ENCODE measurements at regions of chr2 and their contacts with region 1.

Region 1: GRCh38 chr2:223692191-223692947 is 90.2 kb upstream of the SCG2 start:
- DNase-seq: peak; percentile 60
- H3K4me3 ChIP-seq: no peak overlapping the region
- H3K27ac ChIP-seq: no peak overlapping the region
- H3K4me1 ChIP-seq: peaks cover 28% of the 10 kb centered on the region
- H3K27me3 ChIP-seq: no peaks in the 10 kb centered on the region
- CTCF ChIP-seq: peak; percentile 87 to 92

Region 2: GRCh38 chr2:222976521-222977076 is 715.8 kb before region 1 on chr2:
- CTCF ChIA-PET with region 1: no interaction called
- dilution Hi-C with region 1: no loop called
- in situ Hi-C with region 1: no loop called
- intact Hi-C with region 1: loop called (anchors 5 kb)
- DNase-seq: no peak
- H3K4me3 ChIP-seq: no peak overlapping the region
- H3K27ac ChIP-seq: no peak overlapping the region
- H3K4me1 ChIP-seq: peaks cover 15% of the 10 kb centered on the region
- H3K27me3 ChIP-seq: no peaks in the 10 kb centered on the region
- CTCF ChIP-seq: no peak

Region 3: GRCh38 chr2:223727562-223727961 is 35.2 kb after region 1 on chr2:
- CTCF ChIA-PET with region 1: no interaction called
- dilution Hi-C with region 1: no loop called
- in situ Hi-C with region 1: no loop called
- intact Hi-C with region 1: loop called (anchors 5 kb)
- DNase-seq: peak; percentile 62
- H3K4me3 ChIP-seq: no peak overlapping the region
- H3K27ac ChIP-seq: no peak overlapping the region
- H3K4me1 ChIP-seq: peaks cover 21% of the 10 kb centered on the region
- H3K27me3 ChIP-seq: no peaks in the 10 kb centered on the region
- CTCF ChIP-seq: peak; percentile 57 to 80

Region 4: DNA sequence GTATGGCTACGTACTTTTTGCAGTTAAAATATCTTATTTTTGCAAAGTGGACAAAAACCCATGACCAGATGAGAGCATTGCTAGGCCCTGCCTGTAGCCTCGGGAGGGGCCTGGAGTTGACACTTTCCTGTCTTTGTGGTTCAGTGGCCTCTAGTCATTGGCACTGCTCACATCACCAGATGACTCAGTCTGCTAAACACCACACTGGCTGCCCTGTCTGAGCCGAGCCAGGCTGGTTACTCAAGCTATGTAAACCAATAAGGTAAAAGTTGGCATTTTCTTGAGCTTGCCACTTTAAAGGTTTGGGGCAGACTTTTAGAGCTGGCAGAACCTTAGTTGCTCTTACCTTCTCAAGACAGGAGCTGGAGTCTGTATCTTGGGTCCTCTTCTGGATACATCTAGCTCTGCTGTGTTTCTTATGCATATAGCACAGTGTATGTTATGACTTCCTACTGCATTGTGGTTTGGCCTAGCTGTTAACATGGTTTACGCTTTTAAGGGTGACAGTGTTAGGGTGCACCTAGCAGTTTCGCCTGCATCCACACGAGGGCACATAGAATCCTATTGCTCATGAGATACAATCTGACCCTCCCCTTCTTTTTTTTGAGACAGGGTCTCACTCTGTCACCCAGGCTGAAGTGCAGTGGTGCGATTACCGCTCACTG is 68.6 kb after region 1 on chr2:
- CTCF ChIA-PET with region 1: interaction called, 5 read pairs
- dilution Hi-C with region 1: loop called (anchors 5 kb)
- in situ Hi-C with region 1: no loop called
- intact Hi-C with region 1: loop called (anchors 2 kb)
- DNase-seq: peak; percentile 98
- H3K4me3 ChIP-seq: peak overlapping the region in 1 of 3 experiments; percentile 2
- H3K27ac ChIP-seq: peak overlapping the region; percentile 95
- H3K4me1 ChIP-seq: peaks cover 36% of the 10 kb centered on the region
- H3K27me3 ChIP-seq: no peaks in the 10 kb centered on the region
- CTCF ChIP-seq: peak; percentile 39 to 43

Region 5: GRCh38 chr2:223944703-223945531 is 252.5 kb after region 1 on chr2 and contains the start of gene WDFY1:
- CTCF ChIA-PET with region 1: no interaction called
- dilution Hi-C with region 1: loop called (anchors 5 kb)
- in situ Hi-C with region 1: no loop called
- intact Hi-C with region 1: no loop called
- DNase-seq: peak; percentile 84
- H3K4me3 ChIP-seq: peak within 1 kb of the TSS; percentile 71 to 99 (median 93)
- H3K27ac ChIP-seq: peak within 1 kb of the TSS; percentile 74
- H3K4me1 ChIP-seq: peaks cover 21% of the 10 kb centered on the region
- H3K27me3 ChIP-seq: no peaks in the 10 kb centered on the region
- CTCF ChIP-seq: no peak
- total RNA-seq, gene WDFY1: 55.6 to 96.0 TPM

Region 6: GRCh38 chr2:223957092-223957851 is 264.9 kb after region 1 on chr2 and contains the start of gene MRPL44:
- CTCF ChIA-PET with region 1: no interaction called
- dilution Hi-C with region 1: no loop called
- in situ Hi-C with region 1: no loop called
- intact Hi-C with region 1: loop called (anchors 2 kb)
- DNase-seq: peak; percentile 94
- H3K4me3 ChIP-seq: peak within 1 kb of the TSS; percentile 95 to 99 (median 98)
- H3K27ac ChIP-seq: peak within 1 kb of the TSS; percentile 79
- H3K4me1 ChIP-seq: peaks cover 45% of the 10 kb centered on the region
- H3K27me3 ChIP-seq: no peaks in the 10 kb centered on the region
- CTCF ChIP-seq: no peak
- total RNA-seq, gene MRPL44: 24.2 to 27.2 TPM

Measured in mammary epithelial cell (primary cell).